Thyroid gland (tissue), 4 donors: ENCODE measurements at regions of chr14 and their contacts with region 1.

Region 1: GRCh38 chr14:95442633-95443021 is 73.8 kb downstream of the SYNE3 start:
- DNase-seq: peak; percentile 82 to 86
- H3K4me3 ChIP-seq: no peak overlapping the region
- H3K27ac ChIP-seq: no peak overlapping the region
- H3K4me1 ChIP-seq: no peaks in the 10 kb centered on the region
- H3K27me3 ChIP-seq: no peaks in the 10 kb centered on the region
- CTCF ChIP-seq: peak; percentile 63 to 85 (median 80)
- POLR2A ChIP-seq: no peak

Region 2: DNA sequence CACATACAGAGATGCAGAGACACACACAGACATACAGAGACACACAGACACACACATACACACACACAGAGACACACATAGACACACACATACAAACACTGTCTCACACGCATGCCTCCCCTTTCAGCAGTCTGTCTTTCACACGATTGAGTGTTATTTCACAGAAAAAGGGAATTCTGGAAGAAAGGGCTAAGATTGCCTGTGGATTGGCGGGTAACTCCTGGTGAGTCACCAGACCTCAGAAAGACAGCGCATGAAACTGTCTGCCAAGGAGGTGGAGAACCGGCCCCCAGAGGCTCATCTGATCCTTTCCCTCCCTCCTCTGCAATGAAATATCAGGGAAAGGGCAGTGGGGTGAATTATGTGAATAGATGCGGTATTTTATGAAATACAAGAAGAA is 545.5 kb before region 1 on chr14:
- intact Hi-C with region 1: no loop called
- DNase-seq: no peak
- H3K4me3 ChIP-seq: no peak overlapping the region
- H3K27ac ChIP-seq: no peak overlapping the region
- H3K4me1 ChIP-seq: no peaks in the 10 kb centered on the region
- H3K27me3 ChIP-seq: no peaks in the 10 kb centered on the region
- CTCF ChIP-seq: no peak
- POLR2A ChIP-seq: no peak

Region 3: GRCh38 chr14:95361373-95362137 is 81.1 kb before region 1 on chr14:
- intact Hi-C with region 1: no loop called
- DNase-seq: peak; percentile 49 to 61
- H3K4me3 ChIP-seq: no peak overlapping the region
- H3K27ac ChIP-seq: peak overlapping the region in 1 of 3 donors; percentile 62
- H3K4me1 ChIP-seq: peaks cover 17 to 24% of the 10 kb centered on the region in 2 donors
- H3K27me3 ChIP-seq: no peaks in the 10 kb centered on the region
- CTCF ChIP-seq: peak; percentile 18 to 67 (median 54)
- POLR2A ChIP-seq: no peak

Region 4: DNA sequence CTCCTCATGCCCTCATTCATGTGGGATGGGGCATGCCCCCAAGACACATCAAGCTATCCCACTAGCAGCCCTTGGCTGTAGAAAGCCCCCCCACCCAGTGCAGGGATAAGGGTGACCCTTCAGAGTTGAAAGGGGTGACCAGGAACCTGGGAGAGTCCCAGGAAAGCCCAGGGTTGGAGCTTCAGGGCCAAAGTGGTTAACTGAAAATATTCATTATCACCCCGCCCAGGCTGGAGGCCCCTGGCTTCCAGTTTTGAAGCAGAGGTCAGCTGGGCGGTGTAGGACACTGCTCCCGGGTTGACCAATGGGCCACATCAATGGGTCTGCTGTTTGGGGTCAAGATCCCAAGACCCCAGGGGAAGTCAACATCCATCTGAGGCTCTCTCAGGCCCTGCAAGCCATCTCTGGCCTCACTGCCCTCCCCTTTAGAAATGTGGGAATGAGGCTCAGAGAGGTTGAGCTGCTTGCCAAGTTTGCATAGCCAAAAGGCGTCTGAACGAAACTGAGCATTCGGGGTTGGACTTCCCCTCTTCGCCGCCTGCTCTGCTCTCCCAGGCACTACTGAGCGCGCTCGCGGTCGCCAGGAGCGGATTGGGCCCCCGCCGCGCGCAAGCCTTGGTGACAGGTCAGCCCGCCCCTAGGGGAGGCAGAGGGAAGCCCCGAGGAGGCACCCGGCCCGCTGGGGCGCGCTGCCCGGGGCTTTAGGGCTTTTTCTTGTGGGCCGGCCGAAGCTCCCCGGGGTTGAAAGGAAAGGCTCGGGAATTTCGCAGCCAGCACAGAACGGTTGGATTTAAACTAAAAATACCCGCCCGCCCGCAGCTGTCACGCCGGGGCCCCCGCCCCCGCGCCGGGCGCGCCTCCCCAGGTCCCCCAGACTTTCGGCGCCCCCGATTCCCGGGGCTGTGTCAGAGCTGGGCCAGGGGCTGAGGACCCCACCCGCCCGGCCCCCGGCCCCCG is 73.2 kb after region 1 on chr14:
- intact Hi-C with region 1: loop called (anchors 5 kb)
- DNase-seq: peak; percentile 70 to 79
- H3K4me3 ChIP-seq: peak overlapping the region; percentile 32 to 53 (median 38)
- H3K27ac ChIP-seq: peak overlapping the region; percentile 41 to 84 (median 80)
- H3K4me1 ChIP-seq: peaks cover 28 to 56% of the 10 kb centered on the region in 2 donors
- H3K27me3 ChIP-seq: no peaks in the 10 kb centered on the region
- CTCF ChIP-seq: peak in 2 of 6 experiments; percentile 31 to 42
- POLR2A ChIP-seq: no peak

Region 5: GRCh38 chr14:95534299-95535225 is 91.9 kb after region 1 on chr14 and contains the start of gene GLRX5:
- intact Hi-C with region 1: loop called (anchors 5 kb)
- DNase-seq: peak; percentile 99
- H3K4me3 ChIP-seq: peak within 1 kb of the TSS; percentile 69 to 86 (median 83)
- H3K27ac ChIP-seq: peak within 1 kb of the TSS; percentile 20 to 74 (median 49)
- H3K4me1 ChIP-seq: peaks cover 26 to 44% of the 10 kb centered on the region in 2 donors
- H3K27me3 ChIP-seq: no peaks in the 10 kb centered on the region
- CTCF ChIP-seq: no peak
- POLR2A ChIP-seq: peak; percentile 37 to 75
- total RNA-seq, gene GLRX5: 33.9 to 64.1 (median 41.3) TPM